ENCODE measurements at regions of chr6 and their contacts with region 1.

Region 1: DNA sequence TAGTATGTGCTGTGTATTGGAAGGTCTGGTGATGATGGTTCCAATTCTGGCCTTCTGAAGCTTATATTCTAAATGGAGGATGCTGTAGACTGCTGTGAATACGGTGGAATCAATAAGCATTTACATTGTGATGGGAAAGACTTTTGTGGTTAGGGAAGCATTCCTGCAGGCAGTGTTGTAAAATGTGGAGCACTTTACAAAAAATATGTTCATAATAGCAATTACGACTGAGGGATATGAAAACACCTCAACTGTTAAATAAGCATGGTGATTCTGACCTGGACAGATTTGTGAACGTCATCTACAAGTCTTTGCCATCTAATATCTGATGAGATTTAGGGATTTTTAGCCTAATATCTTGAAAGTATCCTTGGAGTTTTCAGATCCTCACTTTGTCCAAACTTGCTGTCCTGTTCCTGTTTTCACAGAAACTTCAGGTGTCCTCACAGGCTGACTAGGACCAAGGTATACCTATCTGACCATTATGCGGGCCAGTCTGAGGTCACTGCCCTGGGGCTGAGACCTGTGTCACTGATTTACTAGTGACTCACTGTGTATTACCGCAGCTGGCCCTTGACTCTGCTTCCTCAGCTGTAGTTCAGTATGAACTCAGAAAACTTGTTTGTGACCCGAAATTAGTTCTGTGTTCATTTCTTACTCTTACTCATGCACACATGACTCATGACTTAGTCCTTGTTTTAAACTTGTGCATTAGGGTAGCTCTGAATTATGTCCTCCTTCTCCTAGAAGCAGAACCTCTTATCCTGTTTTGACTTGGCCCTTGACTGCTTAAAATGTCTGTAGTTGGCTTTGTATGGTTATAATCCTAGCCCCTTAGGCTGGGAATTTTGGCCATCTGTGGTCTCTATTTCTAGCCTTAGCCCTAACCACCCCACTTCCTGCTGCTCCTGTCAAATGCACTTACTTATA is 343.0 kb downstream of the CDKAL1 start:
- DNase-seq: peak; percentile 94
- H3K4me3 ChIP-seq: 0 out of 2 replicates have a peak overlapping the region, but pooled peaks have one; percentile 12
- H3K27ac ChIP-seq: peak overlapping the region; percentile 52
- H3K4me1 ChIP-seq: peaks cover 30% of the 10 kb centered on the region
- H3K27me3 ChIP-seq: no peaks in the 10 kb centered on the region

Region 2: GRCh38 chr6:21064756-21065340 is 187.6 kb after region 1 on chr6:
- in situ Hi-C with region 1: no loop called
- DNase-seq: no peak
- H3K4me3 ChIP-seq: no peak overlapping the region
- H3K27ac ChIP-seq: no peak overlapping the region
- H3K4me1 ChIP-seq: no peaks in the 10 kb centered on the region
- H3K27me3 ChIP-seq: no peaks in the 10 kb centered on the region

Region 3: GRCh38 chr6:21589352-21590345 is 712.4 kb after region 1 on chr6:
- in situ Hi-C with region 1: loop called (anchors 10 kb)
- DNase-seq: peak; percentile 91
- H3K4me3 ChIP-seq: peak overlapping the region; percentile 99
- H3K27ac ChIP-seq: peak overlapping the region; percentile 47; the same call in 1 of the 2 replicates
- H3K4me1 ChIP-seq: 0 out of 2 replicates have a peak, but pooled peaks cover 4% of the 10 kb centered on the region
- H3K27me3 ChIP-seq: no peaks in the 10 kb centered on the region